Activated B cell treated with CpG ODN at 0.5 μM for 24 hours (primary cell): ENCODE measurements at regions of chr6 and their contacts with region 1.

Region 1: GRCh38 chr6:90329386-90330077 is 32.9 kb upstream of the BACH2 start:
- DNase-seq: no peak
- ATAC-seq: no peak
- H3K4me3 Mint-ChIP-seq: no peak overlapping the region
- H3K27ac Mint-ChIP-seq: no peak overlapping the region
- H3K4me1 Mint-ChIP-seq: peaks cover 7% of the 10 kb centered on the region
- H3K27me3 Mint-ChIP-seq: no peaks in the 10 kb centered on the region
- CTCF ChIP-seq: no peak

Region 2: GRCh38 chr6:90263633-90264032 is 65.9 kb before region 1 on chr6:
- CTCF ChIA-PET with region 1: no interaction called
- POLR2A ChIA-PET with region 1: no interaction called
- intact Hi-C with region 1: no loop called
- DNase-seq: no peak
- ATAC-seq: no peak
- H3K4me3 Mint-ChIP-seq: no peak overlapping the region
- H3K27ac Mint-ChIP-seq: peak overlapping the region; percentile 76
- H3K4me1 Mint-ChIP-seq: peaks cover 64% of the 10 kb centered on the region
- H3K27me3 Mint-ChIP-seq: no peaks in the 10 kb centered on the region
- CTCF ChIP-seq: no peak

Region 3: DNA sequence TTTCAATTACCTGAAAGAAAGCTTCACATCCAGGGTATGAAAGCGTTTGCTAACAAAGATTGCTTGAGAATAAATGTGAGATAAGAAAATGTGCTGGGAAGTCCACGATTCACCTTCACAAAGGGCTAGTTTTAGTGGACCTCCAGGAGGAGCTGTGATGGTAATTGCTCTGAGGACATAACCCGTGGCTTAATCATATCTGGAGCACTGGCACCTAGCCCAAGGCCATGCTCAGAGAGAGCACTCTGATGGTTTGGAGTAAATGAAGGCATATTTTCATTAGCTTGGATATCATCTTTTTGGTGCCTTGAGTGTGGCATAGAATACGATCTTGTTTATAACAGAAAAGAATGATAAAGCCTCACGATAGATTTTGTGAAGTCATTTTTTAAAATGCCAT is 14.0 kb after region 1 on chr6:
- CTCF ChIA-PET with region 1: no interaction called
- POLR2A ChIA-PET with region 1: no interaction called
- intact Hi-C with region 1: loop called (anchors 2 kb)
- DNase-seq: no peak
- ATAC-seq: no peak
- H3K4me3 Mint-ChIP-seq: no peak overlapping the region
- H3K27ac Mint-ChIP-seq: no peak overlapping the region
- H3K4me1 Mint-ChIP-seq: peaks cover 2% of the 10 kb centered on the region
- H3K27me3 Mint-ChIP-seq: no peaks in the 10 kb centered on the region
- CTCF ChIP-seq: no peak